CD14-positive monocyte (primary cell): ENCODE measurements at regions of chr6 and their contacts with region 1.

Region 1: DNA sequence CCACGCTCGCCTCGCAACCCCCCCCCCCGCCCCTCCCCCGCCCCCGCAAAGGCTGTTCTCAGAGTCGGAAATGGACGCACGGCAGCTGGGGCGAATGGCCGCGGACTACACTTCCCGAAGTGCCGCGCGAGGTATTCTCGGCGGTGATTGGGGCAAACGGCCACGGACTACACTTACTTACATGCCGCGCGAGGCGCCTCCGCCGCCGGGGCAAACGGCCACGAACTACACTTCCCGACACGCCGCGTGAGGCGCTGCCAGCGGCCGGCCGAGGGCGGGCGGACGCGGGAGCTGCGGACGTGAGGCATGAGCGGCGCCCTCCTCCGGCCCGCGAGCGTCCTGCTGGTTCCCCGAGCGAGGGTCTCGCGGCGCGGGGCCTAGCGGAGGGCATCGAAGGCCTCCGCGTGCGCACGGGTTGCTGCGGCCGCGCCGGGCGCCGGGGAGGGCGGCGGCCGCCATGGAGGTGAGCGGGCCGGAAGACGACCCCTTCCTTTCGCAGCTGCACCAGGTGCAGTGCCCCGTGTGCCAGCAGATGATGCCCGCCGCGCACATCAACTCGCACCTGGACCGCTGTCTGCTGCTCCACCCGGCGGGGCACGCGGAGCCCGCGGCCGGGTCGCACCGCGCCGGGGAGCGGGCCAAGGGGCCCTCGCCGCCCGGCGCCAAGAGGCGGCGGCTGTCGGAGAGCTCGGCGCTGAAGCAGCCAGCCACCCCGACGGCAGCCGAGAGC is at the start of gene WRNIP1:
- DNase-seq: peak; percentile 98 to 99 (median 99)
- H3K4me3 ChIP-seq: peak within 1 kb of the TSS; percentile 82 to 98 (median 92)
- H3K4me3 Mint-ChIP-seq: peak within 1 kb of the TSS; percentile 91 to 94
- H3K27ac ChIP-seq: peak within 1 kb of the TSS; percentile 88 to 89
- H3K27ac Mint-ChIP-seq: peak within 1 kb of the TSS; percentile 98 to 99 (median 99)
- H3K4me1 ChIP-seq: peaks cover 39 to 58% of the 10 kb centered on the region in 2 donors
- H3K4me1 Mint-ChIP-seq: peaks cover 52% of the 10 kb centered on the region
- H3K27me3 ChIP-seq: no peaks in the 10 kb centered on the region
- H3K27me3 Mint-ChIP-seq: peaks cover 0 to 2% (median 0%) of the 10 kb centered on the region in 3 donors
- CTCF ChIP-seq: peak; percentile 86
- polyA plus RNA-seq, gene WRNIP1: 17.5 to 25.8 (median 17.8) TPM

Region 2: GRCh38 chr6:2810092-2810671 is 44.9 kb after region 1 on chr6:
- intact Hi-C with region 1: no loop called
- DNase-seq: peak; percentile 36 to 83 (median 48)
- H3K4me3 ChIP-seq: no peak overlapping the region
- H3K4me3 Mint-ChIP-seq: no peak overlapping the region
- H3K27ac ChIP-seq: no peak overlapping the region
- H3K27ac Mint-ChIP-seq: peak overlapping the region in 5 of 7 donors; percentile 59 to 89 (median 64)
- H3K4me1 ChIP-seq: peaks cover 20 to 30% of the 10 kb centered on the region in 2 donors
- H3K4me1 Mint-ChIP-seq: peaks cover 43% of the 10 kb centered on the region
- H3K27me3 ChIP-seq: no peaks in the 10 kb centered on the region
- H3K27me3 Mint-ChIP-seq: peaks cover 0 to 8% (median 2%) of the 10 kb centered on the region in 3 donors
- CTCF ChIP-seq: no peak

Region 3: DNA sequence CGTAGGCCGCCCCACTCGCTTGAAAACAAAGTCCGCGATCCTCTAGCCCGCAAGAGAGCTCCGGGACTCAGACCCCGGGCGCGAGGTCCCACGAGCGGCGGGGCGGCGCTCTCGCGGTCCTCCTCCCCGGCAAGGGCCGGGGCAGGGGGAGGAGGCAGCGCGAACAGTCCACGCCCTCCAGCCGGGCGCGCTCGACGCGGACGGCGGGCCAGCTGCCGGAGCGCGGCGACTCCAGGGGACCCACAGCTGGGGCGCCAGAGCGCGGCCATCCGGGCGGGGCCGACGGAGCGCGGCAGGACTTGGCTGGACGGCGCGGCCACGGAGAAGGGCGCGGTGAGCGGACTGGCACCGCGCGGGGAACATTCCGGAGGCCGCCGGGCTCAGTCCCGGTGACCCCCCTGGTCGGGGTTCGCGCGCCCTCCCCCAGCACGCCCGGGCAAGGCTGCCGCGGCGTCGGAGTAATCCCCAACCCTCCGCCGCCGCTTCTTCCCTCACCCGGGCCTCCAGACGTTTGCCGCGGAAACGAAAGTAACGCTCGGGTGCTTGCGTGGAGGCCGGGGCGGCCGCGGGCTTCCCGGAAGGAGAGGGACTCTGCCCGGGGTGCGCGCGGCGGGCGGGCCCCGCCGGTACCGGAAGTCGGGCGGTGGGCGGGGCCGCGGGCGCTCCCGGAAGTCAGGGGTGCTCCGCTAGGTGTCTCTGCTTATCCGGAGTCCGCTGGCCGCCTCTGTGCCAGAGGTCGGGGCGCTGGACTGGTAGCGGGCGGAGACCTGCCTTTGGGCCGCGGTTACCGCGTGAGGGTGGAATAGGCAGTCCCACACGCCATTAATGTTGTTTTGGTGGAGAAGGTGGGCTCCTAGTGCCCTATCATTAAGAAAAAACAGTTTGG is 303.2 kb after region 1 on chr6 and contains the start of gene RIPK1:
- intact Hi-C with region 1: loop called in 1 of 2 experiments (anchors 5 kb)
- DNase-seq: peak; percentile 80 to 89 (median 86)
- H3K4me3 ChIP-seq: peak within 1 kb of the TSS; percentile 83 to 91 (median 84)
- H3K4me3 Mint-ChIP-seq: peak within 1 kb of the TSS; percentile 91 to 97
- H3K27ac ChIP-seq: peak within 1 kb of the TSS; percentile 89 to 93
- H3K27ac Mint-ChIP-seq: peak within 1 kb of the TSS; percentile 94 to 98 (median 97)
- H3K4me1 ChIP-seq: peaks cover 24 to 41% of the 10 kb centered on the region in 2 donors
- H3K4me1 Mint-ChIP-seq: peaks cover 40% of the 10 kb centered on the region
- H3K27me3 ChIP-seq: no peaks in the 10 kb centered on the region
- H3K27me3 Mint-ChIP-seq: peaks cover 2 to 5% (median 5%) of the 10 kb centered on the region in 3 donors
- CTCF ChIP-seq: peak; percentile 11
- polyA plus RNA-seq, gene RIPK1: 6.0 to 9.6 (median 9.6) TPM